A549 (cell line): ENCODE measurements at regions of chrX and their contacts with region 1.

Region 1: DNA sequence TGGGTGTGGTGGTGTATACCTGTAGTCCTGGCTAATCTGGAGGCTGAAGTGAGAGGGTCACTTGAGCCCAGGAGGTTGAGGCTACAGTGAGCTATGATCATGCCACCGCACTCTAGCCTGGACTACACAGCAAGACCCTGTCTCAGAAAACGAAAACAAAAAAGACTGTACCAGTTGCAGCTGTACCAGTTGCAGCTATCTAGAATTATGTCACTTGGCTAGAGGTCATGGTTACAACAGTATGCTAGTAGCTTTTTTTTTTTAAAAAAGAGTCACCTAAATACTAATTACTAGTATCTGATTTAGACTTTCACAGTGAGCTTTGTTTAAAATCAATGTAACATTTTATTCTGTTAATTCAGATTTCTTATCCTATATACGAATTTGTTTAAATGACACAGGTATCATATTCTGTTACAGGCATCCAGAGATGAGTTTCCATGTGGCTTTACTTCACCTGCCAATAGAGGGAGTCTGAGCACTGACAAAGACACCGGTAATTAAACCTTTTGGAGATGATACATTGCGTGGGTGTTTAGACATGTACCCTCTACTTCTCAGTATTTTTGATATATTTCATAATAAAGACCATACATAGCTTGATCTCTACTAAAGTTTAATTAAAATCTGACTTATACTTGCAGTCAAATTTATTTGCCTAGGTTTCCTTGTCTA is 100.2 kb upstream of the IL13RA1 start:
- DNase-seq: peak; percentile 22 to 31
- ATAC-seq: peak; percentile 66 to 81; a peak in 5 of 6 replicates
- H3K4me3 ChIP-seq: no peak overlapping the region
- H3K27ac ChIP-seq: no peak overlapping the region
- H3K4me1 ChIP-seq: no peaks in the 10 kb centered on the region
- CTCF ChIP-seq: peak; percentile 62
- EP300 ChIP-seq: no peak
- POLR2A ChIP-seq: no peak
- RAD21 ChIP-seq: peak; percentile 54 to 71; a peak in 4 of 5 replicates

Region 2: DNA sequence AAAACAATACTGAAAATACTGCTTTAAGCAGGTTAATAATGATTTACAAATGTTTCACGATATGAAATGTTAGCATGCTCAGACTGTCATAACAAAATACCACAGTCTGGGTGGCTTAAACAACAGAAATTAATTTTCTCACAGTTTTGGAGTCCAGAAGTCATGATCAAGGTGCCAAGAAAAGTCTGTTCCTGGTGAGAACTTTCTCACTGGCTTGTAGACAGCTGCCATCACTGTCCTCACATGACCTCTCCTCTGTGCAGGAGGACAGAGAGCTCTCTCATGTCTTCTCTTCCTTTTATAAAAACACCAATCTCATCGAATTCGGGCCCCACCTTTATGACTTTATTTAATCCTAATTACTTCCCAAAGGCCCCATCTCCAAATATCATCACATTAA is 937.3 kb before region 1 on chrX:
- CTCF ChIA-PET with region 1: no interaction called
- POLR2A ChIA-PET with region 1: no interaction called
- DNase-seq: no peak
- ATAC-seq: no peak
- H3K4me3 ChIP-seq: no peak overlapping the region
- H3K27ac ChIP-seq: no peak overlapping the region
- H3K4me1 ChIP-seq: no peaks in the 10 kb centered on the region
- CTCF ChIP-seq: no peak
- EP300 ChIP-seq: no peak
- POLR2A ChIP-seq: no peak
- RAD21 ChIP-seq: no peak

Region 3: DNA sequence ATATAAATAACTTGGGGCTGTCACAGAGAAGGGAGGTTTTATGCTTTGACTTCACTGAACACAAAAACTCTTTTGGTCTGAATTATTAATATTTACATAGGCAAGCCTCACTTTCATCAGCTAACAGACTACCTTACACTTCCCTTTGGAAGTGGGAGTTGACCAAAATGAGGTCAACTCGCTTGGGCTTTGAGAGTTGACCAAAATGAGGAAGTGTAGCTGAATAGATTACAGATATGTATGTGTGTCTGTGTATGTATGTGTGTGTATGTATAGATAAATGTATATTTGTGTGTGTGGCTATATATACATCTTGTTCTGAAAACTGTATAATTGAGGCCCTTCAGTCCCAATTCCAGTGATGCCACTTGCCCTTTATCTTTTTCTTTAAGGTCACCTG is 13.1 kb before region 1 on chrX:
- CTCF ChIA-PET with region 1: interaction called, 13 read pairs
- POLR2A ChIA-PET with region 1: no interaction called
- DNase-seq: no peak
- ATAC-seq: no peak
- H3K4me3 ChIP-seq: no peak overlapping the region
- H3K27ac ChIP-seq: no peak overlapping the region
- H3K4me1 ChIP-seq: no peaks in the 10 kb centered on the region
- CTCF ChIP-seq: no peak
- EP300 ChIP-seq: no peak
- POLR2A ChIP-seq: no peak
- RAD21 ChIP-seq: no peak

Region 4: GRCh38 chrX:118637997-118638396 is 10.8 kb after region 1 on chrX:
- CTCF ChIA-PET with region 1: interaction called, 23 read pairs
- POLR2A ChIA-PET with region 1: no interaction called
- DNase-seq: peak in 1 of 2 experiments; percentile 11
- ATAC-seq: peak in 1 of 2 experiments; percentile 69; a peak in 3 of 6 replicates
- H3K4me3 ChIP-seq: no peak overlapping the region
- H3K27ac ChIP-seq: no peak overlapping the region
- H3K4me1 ChIP-seq: no peaks in the 10 kb centered on the region
- CTCF ChIP-seq: peak; percentile 49
- EP300 ChIP-seq: no peak
- POLR2A ChIP-seq: no peak
- RAD21 ChIP-seq: peak; percentile 55 to 70

Region 5: DNA sequence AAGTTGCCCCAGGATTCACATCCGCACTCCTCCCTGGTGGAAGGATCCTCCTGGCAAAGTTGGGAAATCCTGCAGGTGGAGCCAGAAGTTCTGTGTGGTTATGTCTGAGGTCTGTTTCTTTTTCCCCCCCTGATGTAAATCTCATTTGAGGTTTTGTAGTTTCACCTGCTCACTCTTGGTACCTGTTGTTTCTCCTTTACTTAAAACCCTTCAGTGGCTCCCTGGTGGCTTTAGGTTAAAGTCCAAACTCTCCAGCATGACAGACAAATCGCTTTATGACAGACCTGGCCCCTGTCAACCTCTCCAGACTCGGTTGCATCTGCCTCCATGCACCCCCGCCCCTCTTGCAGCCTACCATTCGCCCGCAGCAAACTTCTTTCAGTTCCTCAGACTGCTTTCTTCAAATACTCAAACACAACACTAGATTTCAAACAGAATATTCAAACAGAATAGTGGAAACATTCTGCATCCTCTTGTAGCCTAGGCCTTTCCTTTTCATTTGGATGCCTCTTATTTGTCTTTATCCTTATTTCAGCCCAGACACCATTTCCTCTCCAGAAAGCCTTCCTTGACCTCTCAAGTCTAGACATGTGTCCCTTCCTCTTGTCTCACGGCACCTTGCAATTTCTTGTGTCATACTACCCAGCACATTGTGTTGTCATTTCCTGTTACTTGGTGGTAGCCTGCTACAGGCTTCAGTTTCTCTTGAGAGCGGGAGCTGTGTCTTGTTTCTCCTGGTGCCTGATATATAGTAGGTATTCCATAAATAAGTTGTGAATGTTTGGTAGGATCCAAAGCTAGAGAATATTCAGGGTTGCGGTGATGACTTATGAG is 124.9 kb after region 1 on chrX:
- CTCF ChIA-PET with region 1: no interaction called
- POLR2A ChIA-PET with region 1: no interaction called
- DNase-seq: no peak
- ATAC-seq: no peak
- H3K4me3 ChIP-seq: no peak overlapping the region
- H3K27ac ChIP-seq: no peak overlapping the region
- H3K4me1 ChIP-seq: peaks cover 4% of the 10 kb centered on the region; the same call in 1 of the 3 replicates
- CTCF ChIP-seq: no peak
- EP300 ChIP-seq: no peak
- POLR2A ChIP-seq: no peak
- RAD21 ChIP-seq: no peak